CD8-positive, alpha-beta T cell (primary cell): ENCODE measurements at regions of chr20 and their contacts with region 1.

Region 1: DNA sequence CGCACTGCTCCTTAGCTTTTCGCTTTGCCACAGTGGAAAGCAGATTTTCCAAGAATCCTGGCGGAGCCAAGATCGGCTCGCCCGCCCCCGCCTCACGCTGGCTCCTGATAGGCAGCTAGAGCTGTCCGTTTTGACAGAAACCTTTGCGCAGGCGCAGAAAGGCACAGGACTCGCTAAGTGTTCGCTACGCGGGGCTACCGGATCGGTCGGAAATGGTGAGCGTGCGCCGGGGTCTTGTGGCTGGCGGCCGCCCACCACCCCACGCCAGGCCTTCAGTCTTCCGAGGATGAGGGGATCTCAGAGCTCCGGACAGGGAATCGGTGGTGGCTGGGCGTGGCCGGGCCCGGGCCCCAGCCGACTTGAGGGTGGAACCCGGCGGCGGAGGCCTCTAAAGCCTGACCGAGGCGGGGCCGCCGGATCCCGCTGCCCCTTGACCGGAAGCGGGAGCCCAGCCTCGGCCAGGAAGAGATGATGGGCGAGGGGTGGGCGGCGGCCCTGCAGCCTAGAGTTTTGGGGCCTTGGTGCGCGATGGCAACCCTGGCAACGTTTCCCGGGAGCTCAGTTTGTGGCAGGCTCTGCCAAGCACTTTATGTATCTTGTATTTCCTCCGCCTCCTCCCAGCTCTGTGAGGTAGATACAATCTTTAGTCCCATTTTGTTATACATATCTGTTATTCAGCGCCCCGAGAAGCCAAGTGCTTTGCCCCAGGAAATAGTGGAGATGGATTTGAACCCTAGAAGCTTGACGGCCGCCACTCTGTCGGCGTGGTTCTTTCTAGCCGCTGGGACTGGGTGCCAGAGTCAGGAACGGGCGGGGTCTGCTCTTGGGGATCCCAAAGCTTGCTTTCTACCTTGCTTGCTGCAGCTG is at the start of gene DYNLRB1:
- DNase-seq: peak; percentile 84 to 97 (median 96)
- ATAC-seq: peak; percentile 74
- H3K4me3 ChIP-seq: peak within 1 kb of the TSS; percentile 85 to 100
- H3K4me3 Mint-ChIP-seq: peak within 1 kb of the TSS; percentile 100
- H3K27ac ChIP-seq: peak within 1 kb of the TSS; percentile 77 to 85
- H3K27ac Mint-ChIP-seq: peak within 1 kb of the TSS; percentile 98
- H3K4me1 ChIP-seq: peaks cover 24% of the 10 kb centered on the region
- H3K4me1 Mint-ChIP-seq: peaks cover 60% of the 10 kb centered on the region
- H3K27me3 ChIP-seq: no peaks in the 10 kb centered on the region
- H3K27me3 Mint-ChIP-seq: no peaks in the 10 kb centered on the region
- CTCF ChIP-seq: no peak
- total RNA-seq, gene DYNLRB1: 34.9 to 38.0 TPM

Region 2: DNA sequence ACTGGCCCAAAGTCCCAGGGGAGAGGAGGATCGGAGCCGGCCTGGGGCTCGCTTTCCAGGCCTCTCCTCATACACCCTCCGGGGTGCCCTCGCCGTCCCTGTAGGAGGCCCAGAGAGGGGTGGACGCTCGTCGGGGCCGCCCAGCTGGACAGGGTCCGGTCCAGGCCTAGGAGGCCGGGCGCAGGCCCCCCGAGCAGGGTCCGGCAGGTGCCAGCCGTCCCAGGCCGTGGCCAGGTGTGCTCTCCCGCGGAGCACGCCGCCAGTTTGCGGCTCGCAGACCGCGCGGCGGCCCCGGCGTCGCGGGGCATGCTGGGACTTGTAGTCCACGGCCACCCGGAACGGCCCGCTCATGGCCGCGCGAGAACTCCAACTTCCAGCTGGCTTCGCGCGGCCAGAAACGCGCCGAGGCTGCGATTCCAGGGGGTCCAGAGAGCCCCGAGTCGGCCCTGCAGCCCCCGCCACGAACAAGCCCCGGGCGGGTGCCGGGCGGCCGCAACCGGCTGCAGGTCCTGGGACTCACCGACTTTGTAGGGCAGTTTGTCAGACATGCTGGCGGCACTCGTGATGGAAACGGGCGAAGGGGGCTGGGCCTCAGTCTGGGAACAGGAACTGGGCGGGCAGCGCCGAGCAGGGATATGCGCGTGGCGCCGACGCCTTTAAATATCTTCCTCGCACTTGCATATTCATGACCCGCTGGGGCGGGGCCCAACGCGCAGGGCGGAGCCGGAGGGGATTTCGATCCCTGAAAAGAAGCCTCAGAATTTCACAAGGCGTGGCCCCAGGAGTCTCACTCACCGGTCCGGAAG is 213.6 kb before region 1 on chr20 and contains the start of gene AHCY:
- CTCF ChIA-PET with region 1: no interaction called
- POLR2A ChIA-PET with region 1: interaction called, 10 read pairs
- intact Hi-C with region 1: loop called (anchors 1 kb)
- DNase-seq: peak; percentile 76 to 96 (median 91)
- ATAC-seq: peak; percentile 94
- H3K4me3 ChIP-seq: peak within 1 kb of the TSS; percentile 69 to 92
- H3K4me3 Mint-ChIP-seq: peak within 1 kb of the TSS; percentile 96
- H3K27ac ChIP-seq: peak within 1 kb of the TSS; percentile 67 to 86
- H3K27ac Mint-ChIP-seq: peak within 1 kb of the TSS; percentile 94
- H3K4me1 ChIP-seq: no peaks in the 10 kb centered on the region
- H3K4me1 Mint-ChIP-seq: peaks cover 17% of the 10 kb centered on the region
- H3K27me3 ChIP-seq: no peaks in the 10 kb centered on the region
- H3K27me3 Mint-ChIP-seq: no peaks in the 10 kb centered on the region
- CTCF ChIP-seq: no peak
- total RNA-seq, gene AHCY: 16.1 to 17.8 TPM

Region 3: GRCh38 chr20:34363062-34363464 is 153.4 kb before region 1 on chr20 and contains the start of gene ITCH:
- CTCF ChIA-PET with region 1: no interaction called
- POLR2A ChIA-PET with region 1: interaction called, 12 read pairs
- intact Hi-C with region 1: loop called (anchors 1 to 2 kb)
- DNase-seq: peak; percentile 80 to 96 (median 93)
- ATAC-seq: peak; percentile 99
- H3K4me3 ChIP-seq: peak within 1 kb of the TSS; percentile 92 to 93
- H3K4me3 Mint-ChIP-seq: peak within 1 kb of the TSS; percentile 99
- H3K27ac ChIP-seq: peak within 1 kb of the TSS; percentile 86 to 91
- H3K27ac Mint-ChIP-seq: peak within 1 kb of the TSS; percentile 99
- H3K4me1 ChIP-seq: peaks cover 40% of the 10 kb centered on the region
- H3K4me1 Mint-ChIP-seq: peaks cover 45% of the 10 kb centered on the region
- H3K27me3 ChIP-seq: no peaks in the 10 kb centered on the region
- H3K27me3 Mint-ChIP-seq: no peaks in the 10 kb centered on the region
- CTCF ChIP-seq: no peak
- total RNA-seq, gene ITCH: 50.4 to 55.2 TPM

Region 4: GRCh38 chr20:34558320-34559218 is 42.1 kb after region 1 on chr20 and contains the start of gene MAP1LC3A:
- CTCF ChIA-PET with region 1: no interaction called
- POLR2A ChIA-PET with region 1: interaction called, 3 read pairs
- intact Hi-C with region 1: loop called in 1 of 2 experiments (anchors 1 kb)
- DNase-seq: peak; percentile 78 to 98 (median 90)
- ATAC-seq: peak; percentile 84
- H3K4me3 ChIP-seq: peak within 1 kb of the TSS; percentile 54 to 94
- H3K4me3 Mint-ChIP-seq: peak within 1 kb of the TSS; percentile 75
- H3K27ac ChIP-seq: peak within 1 kb of the TSS; percentile 79 to 97
- H3K27ac Mint-ChIP-seq: peak within 1 kb of the TSS; percentile 95
- H3K4me1 ChIP-seq: peaks cover 8% of the 10 kb centered on the region
- H3K4me1 Mint-ChIP-seq: peaks cover 12% of the 10 kb centered on the region
- H3K27me3 ChIP-seq: no peaks in the 10 kb centered on the region
- H3K27me3 Mint-ChIP-seq: no peaks in the 10 kb centered on the region
- CTCF ChIP-seq: no peak
- total RNA-seq, gene MAP1LC3A: 19.4 to 22.4 TPM

Region 5: DNA sequence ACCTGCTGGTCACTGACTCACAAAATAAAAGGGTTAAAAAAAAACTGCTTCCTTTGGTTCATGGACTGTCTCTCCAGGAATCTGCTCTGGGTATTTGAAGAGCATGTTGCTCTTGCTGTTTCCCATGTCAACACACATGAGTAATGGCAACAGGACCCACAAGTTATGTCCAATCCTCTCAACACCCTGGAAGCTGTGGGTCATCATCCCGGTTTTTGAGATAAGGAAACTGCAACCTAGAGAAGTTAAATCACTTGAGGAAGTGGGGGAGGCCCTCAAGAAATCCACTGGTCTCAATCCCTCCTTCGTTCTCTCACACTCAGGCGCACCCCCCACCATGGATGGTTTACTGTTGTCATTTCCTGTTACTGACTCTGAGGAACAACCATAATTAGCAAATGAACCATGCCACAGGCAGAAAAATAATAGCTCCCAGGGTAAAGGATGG is 54.4 kb after region 1 on chr20:
- CTCF ChIA-PET with region 1: no interaction called
- POLR2A ChIA-PET with region 1: no interaction called
- intact Hi-C with region 1: no loop called
- DNase-seq: peak in 1 of 9 experiments; percentile 21
- ATAC-seq: no peak
- H3K4me3 ChIP-seq: no peak overlapping the region
- H3K4me3 Mint-ChIP-seq: no peak overlapping the region
- H3K27ac ChIP-seq: no peak overlapping the region
- H3K27ac Mint-ChIP-seq: peak overlapping the region; percentile 60
- H3K4me1 ChIP-seq: no peaks in the 10 kb centered on the region
- H3K4me1 Mint-ChIP-seq: no peaks in the 10 kb centered on the region
- H3K27me3 ChIP-seq: no peaks in the 10 kb centered on the region
- H3K27me3 Mint-ChIP-seq: no peaks in the 10 kb centered on the region
- CTCF ChIP-seq: no peak

Region 6: DNA sequence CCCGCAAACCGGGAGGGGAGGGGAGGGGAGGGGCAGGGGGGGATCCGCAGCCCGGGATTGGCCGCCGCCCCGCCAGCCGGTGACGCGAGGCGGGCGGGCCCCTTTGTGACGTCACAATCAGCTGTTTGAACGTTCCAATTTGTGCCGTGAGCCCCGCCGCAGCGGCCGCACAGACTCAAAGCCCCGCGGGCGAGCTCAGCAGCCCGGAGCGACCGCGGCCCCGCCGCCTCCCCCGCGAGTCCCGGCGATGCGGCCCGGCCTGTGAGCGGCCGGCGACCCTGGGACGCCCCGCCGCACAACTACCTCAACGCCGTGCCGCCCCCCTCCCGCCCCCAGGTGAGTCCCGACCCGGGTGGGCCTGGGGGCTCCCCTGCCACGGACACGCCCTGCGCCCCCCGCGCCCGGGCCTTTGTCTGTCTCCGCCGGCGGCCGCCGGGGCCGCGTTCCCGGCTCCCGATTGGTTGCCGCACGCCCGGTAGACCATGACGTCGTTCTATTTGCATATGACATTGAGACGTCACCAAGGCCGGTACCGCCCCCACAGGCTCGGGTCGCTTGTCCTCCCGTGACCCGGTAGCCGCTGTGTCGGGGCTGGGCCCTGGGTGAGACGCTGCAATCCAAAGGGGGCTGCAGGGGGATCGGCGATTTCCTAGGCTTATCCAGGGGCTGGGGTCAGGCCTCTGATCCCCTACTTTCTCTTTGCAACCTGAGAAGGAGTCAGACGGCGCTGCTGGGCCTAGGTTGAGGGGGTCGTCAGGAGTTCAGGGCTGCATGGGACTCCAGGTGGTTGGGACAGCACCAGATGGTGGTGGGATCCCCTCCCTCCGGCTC is 187.9 kb after region 1 on chr20 and contains the start of gene TP53INP2:
- CTCF ChIA-PET with region 1: interaction called, 5 read pairs
- POLR2A ChIA-PET with region 1: no interaction called
- intact Hi-C with region 1: loop called (anchors 1 kb)
- DNase-seq: peak; percentile 71 to 96 (median 87)
- ATAC-seq: peak; percentile 53
- H3K4me3 ChIP-seq: peak within 1 kb of the TSS; percentile 78 to 96
- H3K4me3 Mint-ChIP-seq: peak within 1 kb of the TSS; percentile 93
- H3K27ac ChIP-seq: peak within 1 kb of the TSS; percentile 71 to 96
- H3K27ac Mint-ChIP-seq: peak within 1 kb of the TSS; percentile 95
- H3K4me1 ChIP-seq: peaks cover 14% of the 10 kb centered on the region
- H3K4me1 Mint-ChIP-seq: peaks cover 22% of the 10 kb centered on the region
- H3K27me3 ChIP-seq: peaks cover 0 to 6% of the 10 kb centered on the region in 2 experiments
- H3K27me3 Mint-ChIP-seq: peaks cover 8% of the 10 kb centered on the region
- CTCF ChIP-seq: no peak
- total RNA-seq, gene TP53INP2: 101 to 103 TPM

Region 7: GRCh38 chr20:34876162-34877001 is 359.9 kb after region 1 on chr20 and contains the start of gene ACSS2:
- CTCF ChIA-PET with region 1: no interaction called
- POLR2A ChIA-PET with region 1: no interaction called
- intact Hi-C with region 1: loop called in 1 of 2 experiments (anchors 10 kb)
- DNase-seq: peak; percentile 85 to 97 (median 91)
- ATAC-seq: peak; percentile 85
- H3K4me3 ChIP-seq: peak within 1 kb of the TSS; percentile 55 to 68
- H3K4me3 Mint-ChIP-seq: peak within 1 kb of the TSS; percentile 89
- H3K27ac ChIP-seq: peak within 1 kb of the TSS in 1 of 2 experiments; percentile 24
- H3K27ac Mint-ChIP-seq: peak within 1 kb of the TSS; percentile 57
- H3K4me1 ChIP-seq: peaks cover 46% of the 10 kb centered on the region
- H3K4me1 Mint-ChIP-seq: peaks cover 54% of the 10 kb centered on the region
- H3K27me3 ChIP-seq: no peaks in the 10 kb centered on the region
- H3K27me3 Mint-ChIP-seq: no peaks in the 10 kb centered on the region
- CTCF ChIP-seq: no peak
- total RNA-seq, gene ACSS2: 6.5 to 12.7 TPM

Region 8: DNA sequence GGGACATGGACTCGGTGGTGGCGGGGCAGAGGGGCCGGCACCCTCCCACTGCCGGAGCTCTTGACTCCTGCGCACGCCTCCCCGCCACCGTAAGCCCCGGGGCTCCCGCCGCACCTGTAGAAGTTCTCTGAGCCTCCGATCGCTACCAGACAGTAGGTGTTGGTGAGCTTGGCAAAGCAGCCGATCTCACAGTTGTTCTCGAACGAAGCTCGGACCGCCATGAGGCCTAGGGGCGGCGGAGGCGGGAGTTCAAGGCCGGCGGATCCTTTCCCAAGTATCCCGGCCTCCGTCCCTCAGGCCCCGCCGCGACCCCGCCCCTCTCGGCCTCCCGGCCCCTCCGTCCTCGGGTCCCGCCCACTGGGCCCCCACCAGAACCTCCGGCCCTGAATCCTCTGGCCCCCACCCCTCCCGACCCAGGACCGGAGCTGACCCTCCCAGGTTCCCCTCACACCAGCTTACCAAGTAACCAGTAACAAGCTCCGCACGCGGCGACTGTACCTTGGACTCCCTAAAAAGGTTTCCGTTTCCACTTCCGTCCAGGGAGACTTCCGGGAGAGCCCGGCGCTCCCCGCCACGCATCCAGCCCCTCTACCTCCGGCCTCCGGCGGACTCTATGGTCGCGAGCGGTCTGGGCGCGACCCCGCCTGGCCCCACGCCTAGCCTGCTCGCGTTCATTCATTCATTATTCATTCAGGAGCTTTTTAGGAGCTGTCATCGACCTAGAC is 767.9 kb after region 1 on chr20 and contains the start of gene EIF6:
- CTCF ChIA-PET with region 1: no interaction called
- POLR2A ChIA-PET with region 1: no interaction called
- intact Hi-C with region 1: loop called in 1 of 2 experiments (anchors 10 kb)
- DNase-seq: peak; percentile 35 to 84 (median 71)
- ATAC-seq: peak; percentile 73
- H3K4me3 ChIP-seq: peak within 1 kb of the TSS; percentile 78 to 86
- H3K4me3 Mint-ChIP-seq: peak within 1 kb of the TSS; percentile 97
- H3K27ac ChIP-seq: peak within 1 kb of the TSS; percentile 68 to 84
- H3K27ac Mint-ChIP-seq: peak within 1 kb of the TSS; percentile 96
- H3K4me1 ChIP-seq: peaks cover 10% of the 10 kb centered on the region
- H3K4me1 Mint-ChIP-seq: peaks cover 31% of the 10 kb centered on the region
- H3K27me3 ChIP-seq: no peaks in the 10 kb centered on the region
- H3K27me3 Mint-ChIP-seq: no peaks in the 10 kb centered on the region
- CTCF ChIP-seq: no peak
- total RNA-seq, gene EIF6: 41.7 to 43.2 TPM